ENCODE measurements at regions of chr17 and their contacts with region 1.

Region 1: GRCh38 chr17:46139432-46140210 is 53.6 kb downstream of the KANSL1 start:
- DNase-seq: no peak
- ATAC-seq: peak; percentile 73
- H3K4me3 ChIP-seq: no peak overlapping the region
- H3K27ac ChIP-seq: peak overlapping the region; percentile 23
- H3K4me1 ChIP-seq: peaks cover 22% of the 10 kb centered on the region
- H3K27me3 ChIP-seq: no peaks in the 10 kb centered on the region
- CTCF ChIP-seq: no peak

Region 2: GRCh38 chr17:46115699-46116098 is 23.9 kb before region 1 on chr17:
- CTCF ChIA-PET with region 1: no interaction called
- POLR2A ChIA-PET with region 1: no interaction called
- intact Hi-C with region 1: loop called (anchors 2 kb)
- DNase-seq: no peak
- ATAC-seq: no peak
- H3K4me3 ChIP-seq: no peak overlapping the region
- H3K27ac ChIP-seq: no peak overlapping the region
- H3K4me1 ChIP-seq: peaks cover under 1% of the 10 kb centered on the region
- H3K27me3 ChIP-seq: no peaks in the 10 kb centered on the region
- CTCF ChIP-seq: no peak

Region 3: GRCh38 chr17:46125831-46126230 is 13.8 kb before region 1 on chr17:
- CTCF ChIA-PET with region 1: interaction called, 13 read pairs
- POLR2A ChIA-PET with region 1: no interaction called
- intact Hi-C with region 1: no loop called
- DNase-seq: no peak
- ATAC-seq: no peak
- H3K4me3 ChIP-seq: no peak overlapping the region
- H3K27ac ChIP-seq: no peak overlapping the region
- H3K4me1 ChIP-seq: no peaks in the 10 kb centered on the region
- H3K27me3 ChIP-seq: no peaks in the 10 kb centered on the region
- CTCF ChIP-seq: no peak